Activated CD4-positive, alpha-beta T cell treated with anti-CD3 and anti-CD28 coated beads, Interleukin-2, amount 10 ng/mL, durations not matched to agents 24 days and 14 days (primary cell): ENCODE measurements at regions of chr9 and their contacts with region 1.

Region 1: GRCh38 chr9:137029058-137029936 is 1.3 kb upstream of the ABCA2 start:
- DNase-seq: peak; percentile 92
- H3K4me3 Mint-ChIP-seq: peak overlapping the region; percentile 77
- H3K27ac Mint-ChIP-seq: peak overlapping the region; percentile 67
- H3K4me1 Mint-ChIP-seq: peaks cover 37% of the 10 kb centered on the region
- H3K27me3 Mint-ChIP-seq: peaks cover 3% of the 10 kb centered on the region

Region 2: DNA sequence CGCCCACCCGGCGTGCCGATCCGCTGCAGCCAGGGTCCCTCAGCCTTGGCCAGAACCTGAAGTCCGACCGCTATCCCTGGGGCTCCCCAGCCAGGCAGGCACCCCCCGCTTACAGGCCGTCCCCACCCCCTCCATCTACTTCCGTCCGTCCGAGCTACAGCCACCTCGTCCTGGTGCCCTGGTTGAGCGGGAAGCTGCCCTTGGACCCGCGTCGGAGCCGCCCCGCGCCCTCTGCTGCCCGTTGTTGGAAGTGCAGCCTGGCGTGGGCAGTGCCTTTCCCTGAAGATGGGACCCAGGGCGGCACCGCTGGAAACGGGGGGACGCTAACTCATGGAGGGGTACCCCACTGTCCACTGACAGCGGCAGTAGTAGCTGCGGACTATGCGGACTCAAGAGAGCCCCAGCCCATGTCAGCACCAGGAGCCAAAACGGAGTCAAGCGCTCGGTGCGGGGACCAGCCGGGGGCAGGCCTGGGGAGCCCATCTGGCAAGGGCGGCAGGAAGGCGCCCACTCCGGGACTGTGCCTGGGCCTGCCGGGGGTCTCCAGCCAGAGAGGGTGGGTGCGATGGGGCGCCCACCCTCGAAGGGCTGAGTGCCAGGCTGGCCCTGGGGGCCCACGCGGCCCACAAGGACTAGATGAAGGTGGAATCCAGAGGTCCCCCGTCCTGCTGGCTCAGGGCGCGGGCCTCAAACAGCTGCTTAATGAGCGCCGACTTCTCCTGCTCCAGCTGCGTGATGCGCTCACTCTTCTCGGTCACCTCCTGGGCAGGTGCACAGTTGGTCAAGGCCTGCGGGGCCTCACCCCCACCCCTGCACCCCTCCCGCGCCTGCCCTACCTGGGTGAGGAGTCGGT is 35.0 kb after region 1 on chr9:
- intact Hi-C with region 1: loop called (anchors 2 kb)
- DNase-seq: peak; percentile 91
- H3K4me3 Mint-ChIP-seq: no peak overlapping the region
- H3K27ac Mint-ChIP-seq: peak overlapping the region; percentile 13
- H3K4me1 Mint-ChIP-seq: peaks cover 12% of the 10 kb centered on the region
- H3K27me3 Mint-ChIP-seq: no peaks in the 10 kb centered on the region

Region 3: DNA sequence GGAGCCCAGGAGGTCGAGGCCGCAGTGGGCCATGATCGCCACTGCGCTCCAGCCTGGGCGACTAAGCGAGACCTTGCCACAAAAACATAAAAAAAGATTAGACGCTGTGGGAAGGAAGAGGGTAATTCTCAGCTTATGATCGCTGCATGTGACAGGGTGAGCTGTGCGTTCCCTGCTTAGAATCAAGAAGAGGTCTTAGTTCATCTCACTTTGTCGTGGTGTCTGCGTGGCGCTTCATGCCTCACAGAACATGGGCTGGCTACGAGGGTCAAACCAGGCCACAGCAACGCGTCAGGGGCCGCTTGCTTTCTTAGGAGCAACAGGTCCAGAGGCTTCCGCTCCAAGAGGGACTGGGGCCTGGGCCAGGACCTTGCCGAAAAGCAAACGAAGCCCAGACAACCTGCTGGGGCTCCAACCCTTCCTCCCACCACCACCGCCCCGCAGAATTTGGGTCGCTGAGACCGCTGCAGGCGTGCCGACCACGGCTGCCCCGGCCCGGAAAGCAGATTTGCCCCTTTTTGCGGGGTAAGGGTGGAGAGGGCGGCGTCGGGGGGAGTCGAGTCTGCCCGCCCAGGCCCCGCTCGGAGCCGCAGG is 99.7 kb after region 1 on chr9:
- intact Hi-C with region 1: no loop called
- DNase-seq: peak; percentile 73
- H3K4me3 Mint-ChIP-seq: peak overlapping the region; percentile 86
- H3K27ac Mint-ChIP-seq: peak overlapping the region; percentile 91
- H3K4me1 Mint-ChIP-seq: peaks cover 22% of the 10 kb centered on the region
- H3K27me3 Mint-ChIP-seq: peaks cover 5% of the 10 kb centered on the region

Region 4: GRCh38 chr9:137482094-137482781 is 452.9 kb after region 1 on chr9:
- intact Hi-C with region 1: no loop called
- DNase-seq: peak; percentile 64
- H3K4me3 Mint-ChIP-seq: no peak overlapping the region
- H3K27ac Mint-ChIP-seq: no peak overlapping the region
- H3K4me1 Mint-ChIP-seq: peaks cover 7% of the 10 kb centered on the region
- H3K27me3 Mint-ChIP-seq: no peaks in the 10 kb centered on the region